ENCODE measurements at regions of chr11 and their contacts with region 1.

Region 1: DNA sequence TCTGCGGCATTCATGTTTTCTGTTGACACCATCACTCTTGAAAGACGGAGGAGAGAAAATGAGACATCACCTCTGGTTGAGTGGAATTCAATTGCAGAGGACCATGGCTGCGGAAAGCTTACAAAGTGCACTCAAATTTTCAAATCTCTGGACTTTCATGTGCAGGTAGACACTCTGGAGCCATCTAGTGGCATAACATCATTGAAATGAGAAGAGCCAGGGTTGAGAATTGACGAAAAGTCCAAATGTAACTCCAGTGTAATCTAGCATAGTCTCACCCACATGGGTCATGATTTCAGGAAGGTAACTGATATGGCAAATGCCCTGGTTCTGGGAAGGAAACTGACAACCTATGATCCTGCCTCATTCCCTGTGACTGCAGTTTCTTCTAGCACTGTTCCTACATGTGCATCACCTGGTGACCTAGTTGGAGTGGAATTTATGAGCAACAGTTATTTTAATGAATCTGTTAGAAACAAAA is 687.8 kb downstream of the KCNA4 start:
- DNase-seq: no peak
- H3K4me3 ChIP-seq: no peak overlapping the region
- CTCF ChIP-seq: peak; percentile 70

Region 2: DNA sequence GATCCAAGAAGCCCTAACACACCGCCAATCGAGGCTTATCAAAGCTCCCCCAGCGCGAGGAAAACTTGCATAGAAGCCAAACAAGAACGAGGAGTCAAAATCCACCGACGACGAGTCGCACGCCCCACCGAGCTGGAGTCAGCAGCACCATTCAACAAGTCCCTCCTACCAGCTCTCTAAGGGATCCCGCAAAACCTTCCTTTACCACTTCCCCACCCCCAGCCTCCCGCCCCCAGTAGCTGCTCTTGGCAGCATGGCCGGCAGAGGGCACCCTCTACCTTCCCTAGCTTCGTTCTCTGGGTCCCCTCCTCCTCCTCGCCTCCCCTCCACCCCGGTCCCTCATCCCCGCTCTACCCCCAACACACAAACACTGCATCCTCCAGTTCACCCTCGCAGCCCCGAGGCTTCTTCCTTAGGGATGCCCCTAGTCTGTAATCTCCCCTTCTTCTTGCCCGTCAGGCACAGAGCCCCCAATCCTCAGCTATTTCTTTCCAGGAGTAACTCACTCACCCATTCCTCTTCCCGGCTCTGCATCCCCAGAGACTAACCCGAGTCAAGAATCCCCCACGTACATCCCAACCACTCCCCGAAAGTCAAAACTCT is 1630.0 kb before region 1 on chr11:
- CTCF ChIA-PET with region 1: interaction called, 17 read pairs
- POLR2A ChIA-PET with region 1: interaction called, 4 read pairs
- DNase-seq: peak; percentile 52
- H3K4me3 ChIP-seq: peak overlapping the region; percentile 89
- CTCF ChIP-seq: peak; percentile 87

Region 3: DNA sequence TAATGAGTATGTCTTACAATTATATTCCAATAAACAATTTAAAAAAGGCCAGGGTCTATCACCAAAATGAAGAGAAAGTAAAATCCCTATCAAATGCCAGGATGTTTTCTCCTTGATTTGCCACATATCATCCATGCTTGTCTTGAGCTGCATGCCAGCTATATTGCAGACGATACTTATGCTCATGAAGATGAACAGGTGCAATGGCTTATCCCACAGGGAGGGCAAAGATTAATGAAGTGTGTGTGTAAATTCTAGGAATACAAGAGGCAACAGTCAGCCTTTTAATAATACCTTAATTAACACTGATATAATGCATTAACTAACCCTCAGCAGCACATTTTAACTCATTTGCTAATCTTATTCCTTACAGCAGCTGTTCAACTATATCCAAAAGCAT is 162.7 kb before region 1 on chr11:
- CTCF ChIA-PET with region 1: interaction called, 71 read pairs
- POLR2A ChIA-PET with region 1: no interaction called
- DNase-seq: no peak
- H3K4me3 ChIP-seq: no peak overlapping the region
- CTCF ChIP-seq: no peak

Region 4: DNA sequence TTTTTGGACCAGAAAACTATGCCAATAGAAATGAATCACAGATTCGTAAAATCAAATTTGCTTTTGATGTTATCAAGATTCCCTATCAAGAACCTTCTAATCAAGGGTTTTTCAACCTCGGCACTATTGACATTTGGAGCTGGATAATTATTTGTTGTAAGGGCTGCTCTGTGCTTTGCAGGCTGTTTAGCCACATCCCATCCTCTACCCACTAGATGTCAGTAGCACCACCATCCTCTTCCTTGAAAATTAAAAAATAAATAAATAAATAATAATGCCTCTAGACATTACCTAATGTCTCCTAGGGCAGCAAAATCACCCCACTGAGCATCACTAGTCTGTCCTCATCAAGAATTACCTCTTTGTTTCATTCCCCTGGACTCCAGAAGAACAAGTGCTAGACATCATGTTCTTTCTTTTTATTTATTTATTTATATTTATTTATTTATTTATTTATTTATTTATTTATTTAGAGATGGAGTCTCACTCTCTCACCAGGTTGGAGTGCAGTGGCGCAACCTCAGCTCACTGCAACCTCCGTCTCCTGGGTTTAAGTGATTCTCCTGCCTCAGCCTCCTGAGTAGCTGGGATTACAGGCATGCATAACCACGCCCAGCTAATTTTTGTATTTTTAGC is 56.9 kb before region 1 on chr11:
- CTCF ChIA-PET with region 1: interaction called, 31 read pairs
- POLR2A ChIA-PET with region 1: no interaction called
- DNase-seq: no peak
- H3K4me3 ChIP-seq: no peak overlapping the region
- CTCF ChIP-seq: peak; percentile 32

Region 5: GRCh38 chr11:29309976-29310375 is 19.0 kb before region 1 on chr11:
- CTCF ChIA-PET with region 1: interaction called, 22 read pairs
- POLR2A ChIA-PET with region 1: no interaction called
- DNase-seq: peak; percentile 86
- H3K4me3 ChIP-seq: no peak overlapping the region
- CTCF ChIP-seq: no peak

Measured in AG04449 (cell line).